ENCODE measurements at regions of chr1 and their contacts with region 1.

Region 1: GRCh38 chr1:114274621-114275317 is 121.1 kb upstream of the SYT6 start:
- DNase-seq: no peak
- H3K4me3 ChIP-seq: no peak overlapping the region
- H3K27ac ChIP-seq: no peak overlapping the region
- H3K4me1 ChIP-seq: no peaks in the 10 kb centered on the region
- H3K27me3 ChIP-seq: no peaks in the 10 kb centered on the region
- CTCF ChIP-seq: no peak

Region 2: DNA sequence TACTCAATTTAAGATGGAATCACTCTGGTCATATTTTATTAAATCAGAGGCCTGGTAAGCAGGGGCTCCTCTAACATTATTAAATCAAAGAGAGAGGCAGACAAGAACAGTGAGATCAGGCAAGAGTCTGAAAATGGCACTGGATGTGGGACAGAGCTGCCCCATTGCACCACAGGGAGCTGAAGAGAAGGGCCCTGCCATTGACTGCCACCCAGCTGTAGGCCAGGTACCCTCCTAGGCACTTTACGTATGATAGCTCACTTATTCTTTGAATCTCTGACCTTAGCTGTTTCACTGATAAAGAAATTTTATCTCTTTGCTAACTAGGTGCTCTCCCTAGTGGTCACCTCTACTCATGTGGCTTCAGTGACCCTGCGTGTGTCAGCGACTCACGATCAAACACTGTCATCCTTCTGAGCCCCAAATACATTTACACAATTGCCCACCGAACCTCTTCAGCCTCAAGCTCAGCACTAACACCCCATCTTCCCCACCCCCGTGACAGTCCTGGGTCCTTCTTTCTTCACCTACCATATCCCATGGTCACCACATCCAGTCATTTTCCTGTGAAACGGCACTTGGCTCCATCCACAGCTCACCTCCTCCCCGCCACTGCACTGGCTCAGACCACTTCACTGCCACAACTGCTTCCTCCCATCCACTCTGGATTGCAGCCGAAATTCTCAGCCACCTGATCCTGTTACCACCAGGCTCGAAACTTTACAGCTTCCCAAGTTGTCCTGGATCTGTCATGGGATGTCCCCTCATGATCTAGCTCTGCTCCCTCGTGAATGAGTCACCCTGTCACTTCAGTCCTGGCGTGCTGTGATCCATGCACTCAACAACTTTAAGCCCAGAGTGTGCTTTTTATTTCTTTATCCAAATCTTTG is 23.8 kb before region 1 on chr1:
- CTCF ChIA-PET with region 1: no interaction called
- POLR2A ChIA-PET with region 1: no interaction called
- intact Hi-C with region 1: no loop called
- DNase-seq: no peak
- H3K4me3 ChIP-seq: no peak overlapping the region
- H3K27ac ChIP-seq: no peak overlapping the region
- H3K4me1 ChIP-seq: no peaks in the 10 kb centered on the region
- H3K27me3 ChIP-seq: no peaks in the 10 kb centered on the region
- CTCF ChIP-seq: no peak

Region 3: DNA sequence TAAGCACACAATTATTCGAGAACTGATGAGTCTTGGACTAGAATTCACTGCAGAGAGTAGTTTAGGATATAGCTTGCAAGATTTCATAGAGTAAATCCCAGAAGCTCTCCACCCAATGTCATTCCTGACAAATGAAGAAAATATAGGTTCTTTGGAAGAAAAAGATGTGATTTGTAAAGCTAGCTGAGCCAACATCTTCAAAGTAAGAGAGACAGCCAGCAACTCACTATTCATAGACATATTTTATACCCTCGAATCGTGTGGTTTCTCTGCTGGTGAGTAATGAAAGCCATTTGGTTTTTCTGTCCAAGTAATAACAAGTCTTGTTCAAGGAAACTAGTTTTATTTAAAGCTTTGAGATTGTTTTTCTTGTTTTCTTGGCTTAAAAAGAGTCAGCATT is 44.6 kb after region 1 on chr1:
- CTCF ChIA-PET with region 1: no interaction called
- POLR2A ChIA-PET with region 1: no interaction called
- intact Hi-C with region 1: loop called (anchors 1 kb)
- DNase-seq: no peak
- H3K4me3 ChIP-seq: no peak overlapping the region
- H3K27ac ChIP-seq: no peak overlapping the region
- H3K4me1 ChIP-seq: no peaks in the 10 kb centered on the region
- H3K27me3 ChIP-seq: no peaks in the 10 kb centered on the region
- CTCF ChIP-seq: no peak

Measured in PC-9 (cell line).